ENCODE measurements at regions of chr6 and their contacts with region 1.

Region 1: GRCh38 chr6:134097114-134097707 is 44.8 kb upstream of the SLC2A12 start:
- DNase-seq: peak; percentile 45 to 68 (median 63)
- H3K4me3 ChIP-seq: no peak overlapping the region
- H3K4me3 Mint-ChIP-seq: no peak overlapping the region
- H3K27ac ChIP-seq: no peak overlapping the region
- H3K27ac Mint-ChIP-seq: no peak overlapping the region
- H3K4me1 ChIP-seq: no peaks in the 10 kb centered on the region
- H3K4me1 Mint-ChIP-seq: peaks cover 2% of the 10 kb centered on the region
- H3K27me3 ChIP-seq: peaks cover 2 to 4% of the 10 kb centered on the region in 2 donors
- H3K27me3 Mint-ChIP-seq: peaks cover 0 to 6% (median 1%) of the 10 kb centered on the region in 3 donors
- CTCF ChIP-seq: peak; percentile 85

Region 2: DNA sequence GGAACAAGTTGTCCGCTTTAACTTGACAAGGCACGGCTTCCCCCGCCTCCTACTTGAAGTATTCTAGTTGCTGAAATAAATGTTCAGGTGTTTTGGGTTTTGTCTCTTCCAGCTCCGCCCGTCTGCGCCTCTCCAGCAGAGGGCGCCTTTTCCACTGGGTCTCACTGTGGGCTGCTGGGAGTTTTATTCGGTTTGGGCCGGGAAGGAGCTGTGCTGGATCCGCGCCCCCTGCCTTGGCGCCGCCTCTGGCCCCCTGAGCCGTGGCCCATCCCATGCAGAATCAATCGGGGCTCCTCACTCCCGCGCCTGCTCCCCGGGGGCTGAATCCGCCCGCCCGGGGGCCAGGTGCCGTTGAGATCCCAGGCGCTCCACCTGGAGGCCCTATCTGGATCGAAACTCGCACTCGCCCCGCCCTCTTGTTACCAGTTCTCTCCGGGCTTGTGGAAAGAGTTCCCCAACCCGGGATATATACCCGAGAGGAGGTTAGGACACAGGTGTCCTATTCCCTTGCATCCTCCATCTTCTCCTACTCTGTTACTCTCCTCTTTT is 259.3 kb before region 1 on chr6:
- intact Hi-C with region 1: loop called (anchors 10 kb)
- DNase-seq: peak; percentile 15 to 30 (median 24)
- H3K4me3 ChIP-seq: peak overlapping the region in 2 of 3 experiments; percentile 22 to 54
- H3K4me3 Mint-ChIP-seq: peak overlapping the region in 1 of 2 donors; percentile 80
- H3K27ac ChIP-seq: no peak overlapping the region
- H3K27ac Mint-ChIP-seq: no peak overlapping the region
- H3K4me1 ChIP-seq: peaks cover 4 to 6% of the 10 kb centered on the region in 2 donors
- H3K4me1 Mint-ChIP-seq: peaks cover 8% of the 10 kb centered on the region
- H3K27me3 ChIP-seq: peaks cover 2 to 6% of the 10 kb centered on the region in 2 donors
- H3K27me3 Mint-ChIP-seq: peaks cover 10 to 18% (median 13%) of the 10 kb centered on the region in 3 donors
- CTCF ChIP-seq: peak; percentile 83

Region 3: DNA sequence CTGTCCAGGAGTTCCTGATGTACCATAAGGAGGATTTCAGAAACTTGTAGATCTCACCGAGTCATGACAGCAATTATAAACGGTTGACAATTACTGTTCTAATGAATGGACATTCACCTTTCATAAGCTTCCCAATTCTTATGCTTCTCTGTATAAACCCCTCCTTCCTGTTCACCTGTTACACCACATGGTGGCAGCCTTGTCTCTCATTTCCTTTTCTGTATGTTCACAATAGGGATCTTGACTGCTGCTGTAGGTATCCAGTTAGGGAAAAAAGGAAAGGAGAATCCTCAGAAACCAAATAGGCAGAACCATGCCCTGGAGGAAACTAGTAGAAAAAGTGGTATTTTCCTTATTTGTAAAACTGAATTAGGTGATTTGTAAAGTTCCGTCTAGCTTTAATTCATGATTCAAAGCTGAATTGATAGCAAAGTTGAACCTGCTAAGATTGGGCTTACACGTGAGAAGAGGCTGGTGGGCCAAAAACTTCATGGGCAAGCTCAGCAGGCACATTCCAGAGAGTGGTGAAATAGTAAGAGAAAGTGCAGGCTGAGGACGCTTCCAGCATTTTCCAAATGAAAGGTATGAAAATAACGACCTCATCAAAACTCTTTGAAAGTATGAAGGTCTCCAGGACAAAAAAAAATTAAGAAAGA is 173.1 kb before region 1 on chr6:
- intact Hi-C with region 1: loop called (anchors 2 kb)
- DNase-seq: peak; percentile 44 to 67 (median 63)
- H3K4me3 ChIP-seq: no peak overlapping the region
- H3K4me3 Mint-ChIP-seq: peak overlapping the region in 1 of 2 donors; percentile 9
- H3K27ac ChIP-seq: no peak overlapping the region
- H3K27ac Mint-ChIP-seq: no peak overlapping the region
- H3K4me1 ChIP-seq: no peaks in the 10 kb centered on the region
- H3K4me1 Mint-ChIP-seq: no peaks in the 10 kb centered on the region
- H3K27me3 ChIP-seq: peaks cover 16 to 18% of the 10 kb centered on the region in 2 donors
- H3K27me3 Mint-ChIP-seq: peaks cover 25 to 40% (median 33%) of the 10 kb centered on the region in 3 donors
- CTCF ChIP-seq: peak; percentile 81

Region 4: DNA sequence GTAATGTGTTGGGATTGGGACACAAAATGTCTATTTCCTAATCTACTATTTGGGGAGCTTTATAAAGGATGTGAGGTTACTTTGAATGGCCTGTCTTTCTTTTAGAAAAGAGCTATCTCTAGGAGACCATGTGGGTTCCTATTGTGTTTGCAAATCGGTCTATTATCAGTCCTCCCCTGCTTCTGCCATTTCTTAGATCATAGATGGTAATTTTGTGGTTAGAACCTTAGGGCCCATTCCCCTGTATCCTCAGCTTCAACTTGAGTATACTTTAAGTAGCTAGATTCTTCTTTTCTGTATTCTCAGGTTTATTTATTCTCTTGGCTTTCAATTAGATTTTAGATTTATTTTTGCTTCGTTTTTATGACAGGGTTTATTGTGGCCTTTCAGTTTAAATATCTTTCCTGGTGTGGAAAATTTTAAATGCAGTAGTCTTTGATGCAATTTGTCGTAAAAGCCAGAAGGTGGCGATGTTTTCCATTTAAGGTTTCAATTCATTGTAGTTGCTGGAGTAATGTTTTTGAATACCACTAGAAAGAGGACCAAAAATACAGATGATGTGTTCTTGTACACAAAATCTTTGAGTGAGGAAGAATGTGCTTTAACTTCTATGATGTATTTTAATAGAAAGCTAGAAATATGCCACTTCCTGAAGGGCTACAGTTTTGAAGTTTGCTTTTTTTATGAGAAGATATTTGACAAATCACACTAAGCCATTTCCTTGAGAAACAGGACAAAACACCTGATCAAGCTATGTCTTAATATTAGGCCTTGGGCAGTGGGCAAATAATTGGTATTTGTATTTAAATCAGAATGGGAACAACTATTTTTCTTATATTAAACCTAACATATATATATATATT is 123.9 kb before region 1 on chr6:
- intact Hi-C with region 1: loop called in 1 of 2 experiments (anchors 2 kb)
- DNase-seq: peak; percentile 23 to 58 (median 45)
- H3K4me3 ChIP-seq: no peak overlapping the region
- H3K4me3 Mint-ChIP-seq: no peak overlapping the region
- H3K27ac ChIP-seq: no peak overlapping the region
- H3K27ac Mint-ChIP-seq: no peak overlapping the region
- H3K4me1 ChIP-seq: peaks cover 4 to 8% of the 10 kb centered on the region in 2 donors
- H3K4me1 Mint-ChIP-seq: peaks cover 16% of the 10 kb centered on the region
- H3K27me3 ChIP-seq: no peaks in the 10 kb centered on the region
- H3K27me3 Mint-ChIP-seq: peaks cover 0 to 2% (median 0%) of the 10 kb centered on the region in 3 donors
- CTCF ChIP-seq: peak; percentile 85

Measured in CD14-positive monocyte (primary cell).